ENCODE measurements at regions of chr6 and their contacts with region 1.

Region 1: DNA sequence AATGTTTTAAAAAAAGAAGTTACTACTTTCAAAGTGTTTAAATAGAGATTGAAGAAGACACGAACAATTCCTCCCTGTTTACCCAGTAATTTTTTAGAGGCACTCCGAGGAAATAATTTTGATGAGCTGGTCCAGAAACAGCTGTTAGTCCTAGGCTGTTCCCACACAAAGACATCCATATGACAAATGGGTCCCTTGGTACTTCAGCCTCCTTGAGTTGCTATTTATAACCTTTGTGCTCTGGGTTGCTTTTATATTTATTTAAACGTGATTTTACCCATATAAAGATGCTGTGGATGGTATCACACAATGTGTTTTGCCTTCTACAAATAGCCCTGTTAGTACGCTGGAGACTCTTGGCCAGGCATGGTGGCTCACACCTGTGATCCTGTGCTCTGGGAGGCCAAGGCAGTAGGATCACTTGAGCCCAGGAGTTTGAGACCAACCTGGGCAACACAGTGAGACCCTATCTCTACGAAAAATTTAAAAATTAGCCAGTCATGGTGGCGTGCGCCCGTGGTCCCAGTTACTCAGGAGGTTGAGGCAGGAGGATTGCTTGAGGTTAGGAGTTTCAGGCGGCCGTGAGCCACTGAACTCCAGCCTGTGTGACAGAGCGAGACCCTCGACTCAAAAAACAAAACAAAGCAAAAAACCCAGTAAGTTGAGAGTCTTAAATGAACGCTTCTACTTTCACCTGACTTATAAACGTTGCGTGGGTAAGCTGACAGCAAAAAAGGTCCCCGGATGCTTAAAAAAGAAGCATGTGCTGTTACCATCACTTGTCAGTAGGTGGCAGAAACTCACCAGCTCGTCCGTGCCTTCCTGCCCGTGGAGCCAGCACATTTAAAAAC is 56.9 kb upstream of the ARMH2 start:
- DNase-seq: peak; percentile 85
- H3K4me3 Mint-ChIP-seq: peak overlapping the region; percentile 36
- H3K27ac Mint-ChIP-seq: peak overlapping the region; percentile 95
- H3K4me1 Mint-ChIP-seq: peaks cover 56% of the 10 kb centered on the region
- H3K27me3 Mint-ChIP-seq: no peaks in the 10 kb centered on the region

Region 2: DNA sequence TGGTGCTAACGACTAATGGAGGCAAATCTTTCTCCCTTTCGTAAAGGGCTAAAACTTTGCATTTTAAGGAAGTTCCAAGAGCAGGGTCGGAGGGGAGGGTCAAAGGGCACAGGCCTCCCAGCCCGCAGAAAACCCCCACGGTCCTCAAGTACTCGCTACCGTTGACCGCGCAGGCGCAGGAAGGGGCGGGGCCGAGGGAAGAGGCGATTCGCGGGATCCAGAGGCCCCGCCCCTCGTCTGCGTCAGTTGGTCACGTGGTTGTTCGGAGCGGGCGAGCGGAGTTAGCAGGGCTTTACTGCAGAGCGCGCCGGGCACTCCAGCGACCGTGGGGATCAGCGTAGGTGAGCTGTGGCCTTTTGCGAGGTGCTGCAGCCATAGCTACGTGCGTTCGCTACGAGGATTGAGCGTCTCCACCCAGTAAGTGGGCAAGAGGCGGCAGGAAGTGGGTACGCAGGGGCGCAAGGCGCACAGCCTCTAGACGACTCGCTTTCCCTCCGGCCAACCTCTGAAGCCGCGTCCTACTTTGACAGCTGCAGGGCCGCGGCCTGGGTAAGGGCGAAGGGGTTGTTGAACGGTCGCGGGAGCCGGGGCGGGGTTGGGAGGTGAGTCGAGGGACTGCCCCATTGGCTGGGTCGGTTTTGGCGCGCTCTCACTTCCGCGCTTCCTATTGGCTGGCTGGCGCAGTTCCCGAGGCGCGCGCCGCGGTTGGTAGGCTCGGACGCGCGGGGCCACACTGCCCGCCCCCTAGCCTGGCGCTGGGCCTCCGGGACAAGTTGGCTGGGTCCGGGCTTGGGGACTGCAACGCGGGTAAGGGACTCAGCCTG is 80.7 kb before region 1 on chr6 and contains the start of gene GMNN:
- CTCF ChIA-PET with region 1: no interaction called
- intact Hi-C with region 1: loop called (anchors 1 kb)
- DNase-seq: peak; percentile 99
- H3K4me3 Mint-ChIP-seq: peak within 1 kb of the TSS; percentile 96
- H3K27ac Mint-ChIP-seq: peak within 1 kb of the TSS; percentile 98
- H3K4me1 Mint-ChIP-seq: peaks cover 30% of the 10 kb centered on the region
- H3K27me3 Mint-ChIP-seq: no peaks in the 10 kb centered on the region
- total RNA-seq, gene GMNN: 84.9 to 85.1 TPM

Region 3: DNA sequence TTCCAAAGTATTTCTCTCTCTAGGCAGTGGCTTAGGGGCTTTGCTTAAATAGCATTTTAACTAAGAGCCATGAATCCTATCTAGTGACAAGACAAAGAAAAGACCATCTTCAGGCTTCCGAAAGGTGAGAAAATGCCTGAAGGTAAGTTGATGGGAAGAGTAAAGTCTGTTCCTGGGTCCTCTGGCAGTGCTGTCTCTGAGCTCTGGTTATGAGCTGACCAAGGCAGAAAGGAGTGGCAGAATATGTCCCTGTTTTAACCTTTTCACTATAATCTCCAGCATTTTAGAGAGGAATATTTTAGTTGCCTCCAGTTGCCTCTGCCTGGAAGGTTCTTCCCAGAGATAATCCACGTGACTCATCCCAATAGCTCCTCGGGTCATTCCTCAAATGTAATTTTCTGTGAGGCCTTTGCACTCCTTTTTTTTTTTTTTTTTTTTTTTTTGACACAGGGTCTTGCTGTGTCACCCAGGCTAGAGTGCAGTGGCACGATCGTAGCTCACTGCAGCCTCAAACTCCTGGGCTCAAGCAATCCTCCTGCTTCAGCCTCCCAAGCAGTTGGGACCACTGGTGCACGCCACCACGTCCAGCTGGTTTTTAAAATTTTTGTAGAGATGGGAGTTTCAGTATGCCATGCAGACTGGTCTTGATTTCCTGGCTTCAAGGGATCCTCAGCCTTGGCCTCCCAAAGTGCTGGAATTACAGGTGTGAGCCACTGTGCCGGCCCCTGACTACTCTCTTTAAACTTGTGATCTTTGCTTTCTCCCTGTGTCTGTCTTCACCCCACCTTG is 53.2 kb before region 1 on chr6:
- CTCF ChIA-PET with region 1: no interaction called
- intact Hi-C with region 1: no loop called
- DNase-seq: no peak
- H3K4me3 Mint-ChIP-seq: no peak overlapping the region
- H3K27ac Mint-ChIP-seq: no peak overlapping the region
- H3K4me1 Mint-ChIP-seq: peaks cover 16% of the 10 kb centered on the region
- H3K27me3 Mint-ChIP-seq: no peaks in the 10 kb centered on the region

Region 4: DNA sequence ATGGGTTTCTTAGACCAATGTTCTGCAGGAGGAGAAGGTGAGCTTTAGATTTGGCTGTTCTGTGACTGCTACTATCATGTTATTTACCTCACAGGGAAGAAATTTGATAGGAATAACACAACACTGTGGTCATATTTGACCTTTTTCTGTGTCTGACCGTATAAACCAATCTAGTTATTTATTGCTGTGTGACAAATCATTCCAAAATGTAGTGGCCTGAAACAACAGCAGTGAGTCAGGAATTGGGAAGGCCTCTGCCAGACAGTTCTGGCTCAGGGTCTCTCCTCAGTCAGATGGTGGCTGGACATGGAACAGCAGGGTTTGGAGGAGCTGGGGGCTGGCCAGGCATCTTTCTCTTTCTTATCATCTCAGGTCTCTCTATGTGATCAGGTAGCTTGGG is 47.2 kb after region 1 on chr6:
- CTCF ChIA-PET with region 1: interaction called, 58 read pairs
- intact Hi-C with region 1: loop called (anchors 2 kb)
- DNase-seq: no peak
- H3K4me3 Mint-ChIP-seq: no peak overlapping the region
- H3K27ac Mint-ChIP-seq: peak overlapping the region; percentile 84
- H3K4me1 Mint-ChIP-seq: peaks cover 90% of the 10 kb centered on the region
- H3K27me3 Mint-ChIP-seq: no peaks in the 10 kb centered on the region

Region 5: GRCh38 chr6:24927985-24928745 is 72.5 kb after region 1 on chr6:
- CTCF ChIA-PET with region 1: interaction called, 100 read pairs
- intact Hi-C with region 1: loop called (anchors 1 kb)
- DNase-seq: no peak
- H3K4me3 Mint-ChIP-seq: peak overlapping the region; percentile 90
- H3K27ac Mint-ChIP-seq: peak overlapping the region; percentile 96
- H3K4me1 Mint-ChIP-seq: peaks cover 77% of the 10 kb centered on the region
- H3K27me3 Mint-ChIP-seq: no peaks in the 10 kb centered on the region

Region 6: GRCh38 chr6:25017932-25018567 is 162.4 kb after region 1 on chr6:
- CTCF ChIA-PET with region 1: interaction called, 42 read pairs
- intact Hi-C with region 1: loop called (anchors 1 kb)
- DNase-seq: peak; percentile 93
- H3K4me3 Mint-ChIP-seq: peak overlapping the region; percentile 6
- H3K27ac Mint-ChIP-seq: peak overlapping the region; percentile 84
- H3K4me1 Mint-ChIP-seq: peaks cover 55% of the 10 kb centered on the region
- H3K27me3 Mint-ChIP-seq: no peaks in the 10 kb centered on the region

Region 7: GRCh38 chr6:25062070-25062811 is 206.6 kb after region 1 on chr6:
- CTCF ChIA-PET with region 1: no interaction called
- intact Hi-C with region 1: no loop called
- DNase-seq: no peak
- H3K4me3 Mint-ChIP-seq: no peak overlapping the region
- H3K27ac Mint-ChIP-seq: no peak overlapping the region
- H3K4me1 Mint-ChIP-seq: peaks cover 12% of the 10 kb centered on the region
- H3K27me3 Mint-ChIP-seq: no peaks in the 10 kb centered on the region

Region 8: DNA sequence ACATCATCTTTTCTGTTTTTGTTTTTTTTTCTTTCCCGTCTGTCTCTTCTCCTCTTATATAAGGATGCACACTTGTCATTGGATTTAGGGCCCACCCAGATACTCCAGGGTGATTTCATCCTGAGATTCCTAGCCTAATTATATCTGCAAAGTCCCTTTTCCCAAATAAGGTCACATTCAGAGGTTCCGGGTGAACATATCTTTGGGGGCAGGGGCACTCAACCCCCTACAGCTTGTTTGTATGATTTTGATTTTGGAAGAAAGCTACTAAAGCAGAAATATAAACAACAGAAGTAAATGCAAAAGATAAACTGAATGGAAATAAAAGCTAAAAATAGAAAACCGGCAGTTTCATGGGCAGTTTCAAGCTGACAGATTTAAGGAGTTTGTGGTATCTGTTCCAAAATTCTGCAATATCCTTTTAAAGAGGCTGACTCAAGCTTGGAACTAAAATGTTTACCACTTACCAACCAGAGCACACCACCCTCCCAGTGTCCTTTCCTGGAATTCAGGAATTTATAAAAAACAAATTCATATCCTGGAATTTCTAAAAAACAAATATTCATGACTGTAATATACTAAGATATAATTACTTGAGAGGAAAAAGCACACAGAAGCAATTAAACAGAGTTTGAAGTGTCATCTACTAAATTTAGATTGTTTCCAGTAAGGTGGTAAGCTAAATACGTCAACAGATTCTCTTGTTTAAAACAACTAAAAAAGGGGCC is 323.6 kb after region 1 on chr6:
- CTCF ChIA-PET with region 1: no interaction called
- intact Hi-C with region 1: loop called (anchors 5 kb)
- DNase-seq: no peak
- H3K4me3 Mint-ChIP-seq: no peak overlapping the region
- H3K27ac Mint-ChIP-seq: no peak overlapping the region
- H3K4me1 Mint-ChIP-seq: peaks cover 27% of the 10 kb centered on the region
- H3K27me3 Mint-ChIP-seq: no peaks in the 10 kb centered on the region

Region 9: DNA sequence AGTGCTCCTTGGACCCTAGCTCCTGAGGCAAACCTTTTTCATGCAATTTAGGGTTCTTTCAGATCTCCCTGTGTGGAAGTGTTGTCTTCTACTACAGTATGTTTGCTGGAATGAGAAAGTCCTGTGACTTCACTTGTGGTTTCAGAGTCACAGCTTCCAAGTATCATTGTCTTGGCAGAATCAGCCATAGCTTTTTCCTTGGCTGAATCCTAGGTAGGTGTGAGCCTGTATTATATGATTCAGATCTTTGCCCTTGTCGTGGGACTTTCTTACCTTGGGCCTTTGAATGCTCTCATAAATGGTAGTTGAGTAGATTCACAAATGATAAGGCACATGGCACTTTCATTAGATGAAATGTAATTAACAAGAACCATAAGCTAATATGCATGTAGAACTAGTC is 440.0 kb after region 1 on chr6:
- CTCF ChIA-PET with region 1: no interaction called
- intact Hi-C with region 1: no loop called
- DNase-seq: no peak
- H3K4me3 Mint-ChIP-seq: no peak overlapping the region
- H3K27ac Mint-ChIP-seq: no peak overlapping the region
- H3K4me1 Mint-ChIP-seq: peaks cover 22% of the 10 kb centered on the region
- H3K27me3 Mint-ChIP-seq: no peaks in the 10 kb centered on the region

Measured in activated naive CD4-positive, alpha-beta T cell treated with anti-CD3 and anti-CD28 coated beads for 36 hours (primary cell).